Dendritic cell treated with granulocyte-macrophage colony-stimulating factor and Interleukin-4, amounts not matched to agents 40 ng/mL and 50 ng/mL, for 4 days (primary cell): ENCODE measurements at regions of chr5 and their contacts with region 1.

Region 1: GRCh38 chr5:122192497-122193496 is 63.5 kb downstream of the ZNF474 start:
- H3K4me3 Mint-ChIP-seq: no peak overlapping the region
- H3K27ac Mint-ChIP-seq: no peak overlapping the region
- H3K4me1 Mint-ChIP-seq: no peaks in the 10 kb centered on the region
- H3K27me3 Mint-ChIP-seq: peaks cover 14% of the 10 kb centered on the region

Region 2: DNA sequence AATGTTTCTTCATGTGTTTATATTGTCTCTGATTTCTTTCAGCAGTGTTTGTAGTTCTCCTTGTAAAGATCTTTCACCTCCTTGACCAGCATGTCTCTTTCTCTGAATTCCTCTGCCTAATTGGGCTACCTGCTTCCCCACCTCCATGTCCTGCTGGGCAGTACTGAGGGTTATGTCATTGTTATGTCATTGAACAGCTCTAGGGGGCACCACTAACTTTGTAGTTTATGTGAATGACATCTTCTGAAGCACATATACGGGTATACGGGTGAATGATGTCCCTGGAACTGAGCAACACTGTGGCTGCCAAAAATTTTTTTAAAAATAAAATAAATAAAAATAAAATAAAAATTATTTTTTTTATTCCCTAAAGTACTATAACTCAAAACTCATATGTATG is 102.3 kb after region 1 on chr5:
- intact Hi-C with region 1: no loop called
- H3K4me3 Mint-ChIP-seq: no peak overlapping the region
- H3K27ac Mint-ChIP-seq: no peak overlapping the region
- H3K4me1 Mint-ChIP-seq: no peaks in the 10 kb centered on the region
- H3K27me3 Mint-ChIP-seq: no peaks in the 10 kb centered on the region

Region 3: GRCh38 chr5:122306461-122306860 is 113.7 kb after region 1 on chr5:
- intact Hi-C with region 1: no loop called
- H3K4me3 Mint-ChIP-seq: no peak overlapping the region
- H3K27ac Mint-ChIP-seq: no peak overlapping the region
- H3K4me1 Mint-ChIP-seq: no peaks in the 10 kb centered on the region
- H3K27me3 Mint-ChIP-seq: peaks cover 22% of the 10 kb centered on the region

Region 4: DNA sequence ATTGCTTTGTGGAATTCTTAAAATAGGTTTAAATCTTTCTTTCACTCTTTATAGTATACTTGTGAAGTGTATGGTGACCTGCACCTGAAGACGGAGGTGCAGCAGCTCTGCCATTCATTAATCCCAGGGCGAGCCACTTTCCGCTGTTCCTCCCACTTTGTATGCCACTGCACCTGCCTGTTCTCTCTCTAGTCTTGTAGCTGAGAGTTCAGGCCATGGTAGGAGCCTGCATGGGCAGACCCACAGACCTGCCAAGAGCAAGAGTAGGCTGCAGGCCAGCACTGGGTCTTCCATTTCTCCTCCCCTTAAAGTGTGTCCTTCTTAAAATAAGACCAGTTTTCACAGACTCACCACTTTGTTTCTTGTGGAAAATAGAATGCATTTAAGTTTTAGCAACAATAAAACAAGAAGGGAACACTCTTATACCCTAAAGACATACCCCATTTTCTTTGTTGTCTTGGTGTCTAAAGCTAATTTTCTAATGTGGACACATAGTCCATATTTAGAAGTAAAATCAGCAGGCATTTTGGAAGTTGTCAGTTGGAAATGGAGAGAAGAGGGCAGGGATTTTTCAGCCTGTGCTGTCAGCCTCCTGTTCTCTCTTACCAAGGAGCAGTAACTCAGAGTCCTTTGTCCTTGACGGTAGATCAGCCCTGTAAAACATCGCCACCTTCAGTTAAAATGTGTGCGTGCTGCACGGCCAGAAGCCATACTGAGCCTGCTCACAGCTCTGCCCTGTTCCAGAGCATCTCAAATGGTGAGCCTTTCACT is 222.4 kb after region 1 on chr5:
- intact Hi-C with region 1: loop called (anchors 1 kb)
- H3K4me3 Mint-ChIP-seq: no peak overlapping the region
- H3K27ac Mint-ChIP-seq: no peak overlapping the region
- H3K4me1 Mint-ChIP-seq: no peaks in the 10 kb centered on the region
- H3K27me3 Mint-ChIP-seq: peaks cover 8% of the 10 kb centered on the region

Region 5: GRCh38 chr5:122498163-122498562 is 305.4 kb after region 1 on chr5:
- intact Hi-C with region 1: loop called (anchors 10 kb)
- H3K4me3 Mint-ChIP-seq: no peak overlapping the region
- H3K27ac Mint-ChIP-seq: no peak overlapping the region
- H3K4me1 Mint-ChIP-seq: no peaks in the 10 kb centered on the region
- H3K27me3 Mint-ChIP-seq: peaks cover 2% of the 10 kb centered on the region